ENCODE measurements at regions of chr6 and their contacts with region 1.

Region 1: GRCh38 chr6:116268589-116269293 is 11.0 kb downstream of the TSPYL1 start:
- DNase-seq: peak; percentile 41
- CTCF ChIP-seq: peak; percentile 80

Region 2: DNA sequence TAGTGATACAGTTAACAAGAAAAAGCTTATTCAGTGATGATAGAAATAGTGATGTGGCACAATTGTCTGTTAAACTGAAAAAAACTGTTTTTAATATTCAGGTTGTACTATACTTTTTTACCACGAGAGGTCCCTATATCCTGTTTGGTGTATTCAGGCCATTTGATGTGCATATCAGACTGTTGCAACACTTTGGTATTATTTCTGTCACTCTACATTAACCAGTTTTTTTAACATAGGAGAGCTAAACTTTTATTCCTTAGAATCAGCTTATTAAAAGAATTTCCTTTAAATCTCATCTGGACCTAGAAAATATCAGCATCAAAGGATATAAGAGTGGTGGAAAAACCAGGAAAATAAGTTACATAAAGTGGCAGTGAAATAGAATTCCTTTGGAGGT is 51.7 kb before region 1 on chr6:
- CTCF ChIA-PET with region 1: interaction called, 12 read pairs
- POLR2A ChIA-PET with region 1: no interaction called
- DNase-seq: no peak
- CTCF ChIP-seq: peak; percentile 23

Region 3: GRCh38 chr6:116279260-116280063 is 10.7 kb after region 1 on chr6 and contains the start of gene TSPYL1:
- CTCF ChIA-PET with region 1: interaction called, 52 read pairs
- POLR2A ChIA-PET with region 1: no interaction called
- DNase-seq: peak; percentile 93
- CTCF ChIP-seq: peak; percentile 21

Region 4: DNA sequence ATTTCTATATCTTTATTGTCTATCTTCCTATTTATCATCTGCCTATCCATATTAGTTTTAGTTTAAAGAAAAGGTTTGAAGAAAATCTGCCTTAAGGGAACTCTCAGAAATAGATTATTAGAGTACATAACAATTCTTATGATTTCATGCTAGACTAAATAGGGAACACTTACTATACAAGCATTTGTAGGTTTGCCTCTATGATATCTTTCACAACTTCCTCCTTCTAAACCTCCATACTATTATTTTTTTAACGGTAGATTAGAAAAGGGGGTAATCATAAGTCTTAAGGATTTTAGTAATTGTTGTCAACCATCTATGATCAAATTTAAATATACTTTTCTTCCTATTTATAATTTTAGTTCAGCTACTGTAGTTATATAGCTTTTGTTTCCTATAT is 90.4 kb after region 1 on chr6:
- CTCF ChIA-PET with region 1: no interaction called
- POLR2A ChIA-PET with region 1: no interaction called
- DNase-seq: no peak
- CTCF ChIP-seq: no peak

Region 5: DNA sequence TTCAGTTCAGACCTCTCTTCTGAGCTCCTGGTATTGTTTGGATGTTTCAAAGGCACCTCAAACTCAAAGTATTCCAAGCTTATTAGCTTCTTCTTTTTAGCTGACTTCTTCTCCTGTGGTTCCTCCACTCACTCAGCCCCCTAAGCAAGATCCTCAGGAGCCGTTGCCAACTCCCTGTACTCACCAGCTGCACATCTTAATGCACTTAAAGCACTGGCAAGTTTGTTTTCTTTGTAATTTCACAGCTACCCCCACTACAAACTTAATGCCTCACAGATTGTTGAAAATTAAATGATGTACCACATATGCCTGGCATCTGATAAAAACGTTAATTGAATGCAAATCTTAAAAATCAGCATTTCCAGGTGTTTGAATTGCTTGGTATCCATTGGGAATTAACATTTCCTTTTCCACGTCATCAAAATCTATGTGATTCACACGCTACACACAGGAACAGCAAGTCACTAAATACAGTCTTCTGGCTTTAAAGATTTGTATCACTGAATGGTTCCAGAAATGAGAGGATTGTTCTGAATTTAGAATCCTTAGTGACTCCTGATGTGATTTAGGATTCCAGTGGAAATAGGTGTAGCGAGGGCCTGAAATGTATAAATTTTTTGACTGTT is 216.9 kb after region 1 on chr6:
- CTCF ChIA-PET with region 1: no interaction called
- POLR2A ChIA-PET with region 1: no interaction called
- DNase-seq: no peak
- CTCF ChIP-seq: no peak

Region 6: DNA sequence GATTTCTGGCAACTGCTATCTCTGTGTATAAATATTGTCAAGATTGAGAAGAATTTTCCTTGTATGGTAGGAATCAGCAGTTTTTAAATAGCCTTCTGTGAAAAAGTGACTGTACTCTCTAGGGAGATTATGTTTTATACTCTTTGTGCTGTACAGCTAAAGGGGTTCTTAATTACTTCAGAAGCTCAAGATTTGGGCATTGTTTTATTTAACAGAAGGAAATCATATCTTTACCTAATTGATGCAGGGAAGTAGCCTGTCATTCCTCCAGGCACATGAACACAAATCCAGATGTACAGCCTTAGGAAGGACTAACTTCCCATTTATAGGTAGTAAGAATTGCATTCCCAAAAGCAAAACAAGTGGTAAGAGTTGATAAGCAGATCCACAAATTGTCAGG is 244.0 kb after region 1 on chr6:
- CTCF ChIA-PET with region 1: interaction called, 15 read pairs
- POLR2A ChIA-PET with region 1: no interaction called
- DNase-seq: no peak
- CTCF ChIP-seq: no peak

Region 7: GRCh38 chr6:116561377-116562018 is 292.8 kb after region 1 on chr6:
- CTCF ChIA-PET with region 1: interaction called, 47 read pairs
- POLR2A ChIA-PET with region 1: no interaction called
- DNase-seq: peak; percentile 55
- CTCF ChIP-seq: peak; percentile 96